SK-N-SH (cell line): ENCODE measurements at regions of chr7 and their contacts with region 1.

Region 1: GRCh38 chr7:151244196-151244840 is 4.2 kb downstream of the SMARCD3 start:
- DNase-seq: peak; percentile 93
- H3K4me3 ChIP-seq: peak overlapping the region; percentile 39 to 46; a peak in 2 of 4 replicates
- H3K27ac ChIP-seq: peak overlapping the region in 1 of 2 experiments; percentile 59; a peak in 1 of 4 replicates
- H3K4me1 ChIP-seq: peaks cover 35 to 45% of the 10 kb centered on the region in 2 experiments
- H3K27me3 ChIP-seq: no peaks in the 10 kb centered on the region
- CTCF ChIP-seq: peak; percentile 100
- EP300 ChIP-seq: peak in 1 of 2 experiments; percentile 59; a peak in 2 of 4 replicates
- RAD21 ChIP-seq: peak; percentile 77

Region 2: GRCh38 chr7:151110941-151111645 is 133.2 kb before region 1 on chr7:
- CTCF ChIA-PET with region 1: interaction called, 14 read pairs
- POLR2A ChIA-PET with region 1: no interaction called
- DNase-seq: peak; percentile 96
- H3K4me3 ChIP-seq: no peak overlapping the region; a peak in 1 of 4 replicates
- H3K27ac ChIP-seq: no peak overlapping the region
- H3K4me1 ChIP-seq: peaks cover 24 to 36% of the 10 kb centered on the region in 2 experiments
- H3K27me3 ChIP-seq: no peaks in the 10 kb centered on the region
- CTCF ChIP-seq: peak; percentile 94
- EP300 ChIP-seq: no peak
- RAD21 ChIP-seq: peak; percentile 90

Region 3: DNA sequence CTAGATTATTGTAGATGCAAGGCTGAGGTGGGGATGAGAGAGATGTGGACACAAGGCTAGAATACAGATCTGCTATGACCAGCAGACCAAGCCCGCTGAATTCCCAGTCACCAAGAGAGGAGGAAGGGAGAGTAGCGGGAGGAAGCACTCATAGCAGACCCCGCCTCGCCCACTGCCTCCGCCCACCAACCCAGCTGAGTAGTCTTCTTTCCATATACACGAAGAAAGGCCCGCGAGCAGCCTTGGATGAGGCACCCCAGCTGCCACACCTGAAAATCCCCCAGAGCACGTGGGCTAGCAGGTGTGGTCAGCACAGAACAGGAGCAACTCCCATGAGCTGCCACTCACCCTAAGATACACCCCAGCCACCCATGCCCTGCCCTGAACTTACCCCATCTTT is 26.1 kb before region 1 on chr7:
- CTCF ChIA-PET with region 1: interaction called, 16 read pairs
- POLR2A ChIA-PET with region 1: no interaction called
- DNase-seq: no peak
- H3K4me3 ChIP-seq: no peak overlapping the region
- H3K27ac ChIP-seq: no peak overlapping the region
- H3K4me1 ChIP-seq: no peaks in the 10 kb centered on the region
- H3K27me3 ChIP-seq: no peaks in the 10 kb centered on the region
- CTCF ChIP-seq: no peak
- EP300 ChIP-seq: no peak
- RAD21 ChIP-seq: no peak

Region 4: GRCh38 chr7:151256410-151257045 is 12.2 kb after region 1 on chr7:
- CTCF ChIA-PET with region 1: interaction called, 30 read pairs
- POLR2A ChIA-PET with region 1: interaction called, 8 read pairs
- DNase-seq: no peak
- H3K4me3 ChIP-seq: no peak overlapping the region
- H3K27ac ChIP-seq: no peak overlapping the region
- H3K4me1 ChIP-seq: peaks cover 7 to 20% of the 10 kb centered on the region in 2 experiments; a peak in 3 of 4 replicates
- H3K27me3 ChIP-seq: no peaks in the 10 kb centered on the region
- CTCF ChIP-seq: no peak
- EP300 ChIP-seq: no peak
- RAD21 ChIP-seq: no peak

Region 5: GRCh38 chr7:151276666-151277590 is 32.6 kb after region 1 on chr7:
- CTCF ChIA-PET with region 1: interaction called, 14 read pairs
- POLR2A ChIA-PET with region 1: interaction called, 3 read pairs
- DNase-seq: peak; percentile 98
- H3K4me3 ChIP-seq: peak overlapping the region; percentile 55 to 59
- H3K27ac ChIP-seq: peak overlapping the region in 1 of 2 experiments; percentile 35; a peak in 1 of 4 replicates
- H3K4me1 ChIP-seq: peaks cover 0 to 12% of the 10 kb centered on the region in 2 experiments; a peak in 1 of 4 replicates
- H3K27me3 ChIP-seq: no peaks in the 10 kb centered on the region
- CTCF ChIP-seq: no peak
- EP300 ChIP-seq: no peak
- RAD21 ChIP-seq: no peak

Region 6: GRCh38 chr7:151315038-151315655 is 70.8 kb after region 1 on chr7:
- CTCF ChIA-PET with region 1: interaction called, 28 read pairs
- POLR2A ChIA-PET with region 1: no interaction called
- DNase-seq: peak; percentile 90
- H3K4me3 ChIP-seq: no peak overlapping the region
- H3K27ac ChIP-seq: no peak overlapping the region
- H3K4me1 ChIP-seq: no peaks in the 10 kb centered on the region
- H3K27me3 ChIP-seq: no peaks in the 10 kb centered on the region
- CTCF ChIP-seq: peak; percentile 97
- EP300 ChIP-seq: no peak
- RAD21 ChIP-seq: peak; percentile 90